Calu3 (cell line): ENCODE measurements at regions of chr10 and their contacts with region 1.

Region 1: GRCh38 chr10:119686439-119687191 is 35.4 kb downstream of the BAG3 start:
- DNase-seq: peak; percentile 85
- H3K4me3 Mint-ChIP-seq: peak overlapping the region; percentile 59
- H3K27ac Mint-ChIP-seq: peak overlapping the region; percentile 50
- H3K4me1 Mint-ChIP-seq: peaks cover 24% of the 10 kb centered on the region
- H3K27me3 Mint-ChIP-seq: no peaks in the 10 kb centered on the region
- CTCF ChIP-seq: peak; percentile 82

Region 2: DNA sequence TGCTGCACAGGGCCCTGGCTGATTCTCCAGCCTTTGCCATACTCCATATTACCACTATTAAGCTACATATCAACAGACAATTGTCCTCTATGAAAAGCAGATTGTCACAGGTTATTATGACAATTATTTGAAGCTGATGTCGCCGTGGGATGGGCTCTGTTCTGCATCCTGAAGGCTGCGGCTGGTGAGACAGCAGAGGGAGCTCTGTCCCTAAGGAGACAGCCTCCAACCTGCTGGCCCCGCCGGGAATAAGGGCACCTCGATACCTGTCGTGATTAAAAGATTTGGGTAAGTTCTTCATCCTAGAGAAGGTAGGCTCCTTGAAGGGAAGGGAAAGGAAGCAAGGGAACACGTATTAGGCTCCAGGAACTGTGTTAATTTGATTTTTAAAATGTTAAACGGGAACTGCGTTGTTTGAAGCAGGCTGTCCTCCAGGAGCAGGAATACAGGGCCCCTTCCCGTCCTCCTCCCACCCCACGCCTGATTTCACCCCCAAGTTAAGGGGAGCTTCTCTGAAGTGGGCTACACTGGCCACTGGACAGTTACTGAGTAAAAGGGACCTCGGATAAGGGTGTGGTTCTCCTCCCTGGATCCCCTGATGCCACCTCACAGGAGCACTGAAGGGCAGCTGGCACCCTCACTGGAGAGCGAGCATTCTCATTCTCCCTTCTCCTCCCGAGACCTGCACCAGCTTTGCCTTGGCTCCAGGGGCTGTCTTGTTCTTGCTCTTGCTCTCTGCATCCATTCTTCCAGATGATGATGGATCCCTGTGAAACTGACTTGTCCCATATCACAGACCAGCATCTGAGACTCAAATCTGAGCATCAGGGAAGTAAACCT is 78.1 kb before region 1 on chr10:
- CTCF ChIA-PET with region 1: no interaction called
- intact Hi-C with region 1: loop called (anchors 1 kb)
- DNase-seq: peak; percentile 57
- H3K4me3 Mint-ChIP-seq: no peak overlapping the region
- H3K27ac Mint-ChIP-seq: no peak overlapping the region
- H3K4me1 Mint-ChIP-seq: no peaks in the 10 kb centered on the region
- H3K27me3 Mint-ChIP-seq: no peaks in the 10 kb centered on the region
- CTCF ChIP-seq: peak; percentile 37

Region 3: GRCh38 chr10:119650692-119651513 is 35.7 kb before region 1 on chr10 and contains the start of gene BAG3:
- CTCF ChIA-PET with region 1: no interaction called
- intact Hi-C with region 1: no loop called
- DNase-seq: peak; percentile 75
- H3K4me3 Mint-ChIP-seq: peak within 1 kb of the TSS; percentile 76
- H3K27ac Mint-ChIP-seq: peak within 1 kb of the TSS; percentile 70
- H3K4me1 Mint-ChIP-seq: peaks cover 19% of the 10 kb centered on the region
- H3K27me3 Mint-ChIP-seq: no peaks in the 10 kb centered on the region
- CTCF ChIP-seq: no peak
- total RNA-seq, gene BAG3: 29.6 and 35.2 TPM in 2 replicates

Region 4: GRCh38 chr10:119725828-119726675 is 39.4 kb after region 1 on chr10 and contains the start of gene INPP5F:
- CTCF ChIA-PET with region 1: interaction called, 12 read pairs
- intact Hi-C with region 1: no loop called
- DNase-seq: peak; percentile 97
- H3K4me3 Mint-ChIP-seq: peak within 1 kb of the TSS; percentile 72
- H3K27ac Mint-ChIP-seq: peak within 1 kb of the TSS; percentile 61
- H3K4me1 Mint-ChIP-seq: peaks cover 26% of the 10 kb centered on the region
- H3K27me3 Mint-ChIP-seq: no peaks in the 10 kb centered on the region
- CTCF ChIP-seq: no peak
- total RNA-seq, gene INPP5F: 6.9 and 7.3 TPM in 2 replicates

Region 5: GRCh38 chr10:119737827-119738226 is 51.2 kb after region 1 on chr10:
- CTCF ChIA-PET with region 1: no interaction called
- intact Hi-C with region 1: loop called (anchors 5 kb)
- DNase-seq: peak; percentile 48
- H3K4me3 Mint-ChIP-seq: peak overlapping the region; percentile 34
- H3K27ac Mint-ChIP-seq: peak overlapping the region; percentile 86
- H3K4me1 Mint-ChIP-seq: peaks cover 31% of the 10 kb centered on the region
- H3K27me3 Mint-ChIP-seq: no peaks in the 10 kb centered on the region
- CTCF ChIP-seq: no peak

Region 6: DNA sequence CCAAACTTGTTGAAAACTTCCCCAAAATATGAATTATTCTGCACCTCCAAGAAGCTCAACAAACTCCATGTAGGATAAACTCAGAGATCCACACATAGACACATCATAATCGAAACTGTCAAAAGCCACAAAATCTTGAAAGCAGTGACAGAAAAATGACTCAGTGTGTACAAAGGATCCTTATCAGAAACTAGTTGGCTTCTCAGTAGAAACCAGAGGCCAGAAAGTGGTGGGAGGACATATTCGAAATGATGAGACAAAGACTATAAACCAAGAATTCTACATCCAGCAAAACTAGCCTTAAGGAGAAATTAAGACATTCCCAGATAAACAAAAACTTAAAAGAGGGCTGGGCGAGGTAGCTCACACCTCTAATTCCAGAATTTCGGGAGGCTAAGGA is 147.6 kb after region 1 on chr10:
- CTCF ChIA-PET with region 1: interaction called, 3 read pairs
- intact Hi-C with region 1: loop called (anchors 5 kb)
- DNase-seq: no peak
- H3K4me3 Mint-ChIP-seq: no peak overlapping the region
- H3K27ac Mint-ChIP-seq: no peak overlapping the region
- H3K4me1 Mint-ChIP-seq: peaks cover 8% of the 10 kb centered on the region
- H3K27me3 Mint-ChIP-seq: no peaks in the 10 kb centered on the region
- CTCF ChIP-seq: no peak

Region 7: DNA sequence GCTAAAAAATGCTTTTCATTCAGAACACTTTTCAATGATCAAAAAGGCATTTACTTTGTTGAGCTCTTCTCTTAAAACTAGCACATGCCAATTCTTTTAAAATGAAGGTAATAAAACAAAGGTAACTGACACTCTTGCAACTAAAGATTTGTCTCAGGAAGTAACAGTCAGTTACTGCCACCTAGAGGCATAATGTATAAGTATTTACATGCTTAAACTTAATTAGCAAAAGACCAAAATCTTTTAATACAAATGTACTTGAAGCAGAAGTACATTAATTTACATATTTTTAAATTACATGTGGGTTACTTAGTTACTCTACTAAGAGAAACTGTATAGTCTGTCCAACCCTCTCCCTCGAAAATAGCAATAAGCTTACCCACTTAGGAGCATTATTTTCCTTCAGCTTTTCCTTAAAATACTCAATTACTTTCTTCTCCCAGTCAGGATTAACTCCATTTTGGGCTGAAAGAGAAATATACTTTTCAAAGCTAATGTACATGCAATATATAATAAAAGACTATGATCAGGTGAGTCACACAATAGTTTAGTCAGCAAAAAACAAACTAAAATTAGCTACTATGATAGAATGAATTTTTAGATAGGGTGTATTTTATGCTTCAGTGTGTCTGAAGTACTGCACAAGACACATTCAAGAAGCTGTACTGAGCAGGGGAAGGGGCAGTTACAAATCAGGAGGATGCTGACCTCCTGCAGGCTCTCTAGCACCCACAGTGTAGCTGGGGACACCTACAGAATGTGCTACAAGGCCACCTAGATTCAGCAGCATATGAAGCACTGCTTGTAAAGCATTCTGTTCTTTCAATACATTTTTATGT is 173.0 kb after region 1 on chr10:
- CTCF ChIA-PET with region 1: interaction called, 4 read pairs
- intact Hi-C with region 1: loop called (anchors 1 kb)
- DNase-seq: no peak
- H3K4me3 Mint-ChIP-seq: no peak overlapping the region
- H3K27ac Mint-ChIP-seq: no peak overlapping the region
- H3K4me1 Mint-ChIP-seq: peaks cover 7% of the 10 kb centered on the region
- H3K27me3 Mint-ChIP-seq: no peaks in the 10 kb centered on the region
- CTCF ChIP-seq: peak; percentile 17

Region 8: GRCh38 chr10:120336911-120337540 is 650.4 kb after region 1 on chr10:
- CTCF ChIA-PET with region 1: no interaction called
- intact Hi-C with region 1: loop called (anchors 5 kb)
- DNase-seq: peak; percentile 53
- H3K4me3 Mint-ChIP-seq: no peak overlapping the region
- H3K27ac Mint-ChIP-seq: no peak overlapping the region
- H3K4me1 Mint-ChIP-seq: no peaks in the 10 kb centered on the region
- H3K27me3 Mint-ChIP-seq: no peaks in the 10 kb centered on the region
- CTCF ChIP-seq: peak; percentile 31